ENCODE measurements at regions of chr3 and their contacts with region 1.

Region 1: DNA sequence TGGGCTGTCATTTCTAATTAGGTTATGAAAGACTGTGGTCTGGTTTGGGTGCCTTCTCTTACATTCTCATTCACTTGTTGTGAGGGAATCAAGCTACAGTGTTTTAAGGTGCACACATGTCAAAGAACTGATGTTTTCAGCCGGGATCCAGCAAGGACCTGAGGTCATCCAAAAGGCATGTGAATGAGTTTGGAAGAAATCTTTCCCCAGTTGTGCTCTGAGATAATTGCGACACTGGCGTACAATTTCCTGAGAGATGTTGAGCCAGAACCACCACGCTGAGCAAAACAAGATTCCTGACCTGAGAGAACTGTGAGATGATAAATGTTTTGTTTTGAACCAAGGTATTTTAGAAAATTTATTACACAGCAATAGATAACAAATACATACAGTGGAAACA is 295.3 kb upstream of the SLITRK3 start:
- DNase-seq: no peak
- H3K4me3 Mint-ChIP-seq: no peak overlapping the region
- H3K27ac Mint-ChIP-seq: no peak overlapping the region
- H3K4me1 Mint-ChIP-seq: no peaks in the 10 kb centered on the region
- H3K27me3 Mint-ChIP-seq: no peaks in the 10 kb centered on the region
- CTCF ChIP-seq: no peak

Region 2: GRCh38 chr3:165464736-165465135 is 26.8 kb before region 1 on chr3:
- CTCF ChIA-PET with region 1: no interaction called
- intact Hi-C with region 1: loop called (anchors 2 kb)
- DNase-seq: no peak
- H3K4me3 Mint-ChIP-seq: no peak overlapping the region
- H3K27ac Mint-ChIP-seq: no peak overlapping the region
- H3K4me1 Mint-ChIP-seq: peaks cover 18% of the 10 kb centered on the region
- H3K27me3 Mint-ChIP-seq: no peaks in the 10 kb centered on the region
- CTCF ChIP-seq: no peak

Region 3: DNA sequence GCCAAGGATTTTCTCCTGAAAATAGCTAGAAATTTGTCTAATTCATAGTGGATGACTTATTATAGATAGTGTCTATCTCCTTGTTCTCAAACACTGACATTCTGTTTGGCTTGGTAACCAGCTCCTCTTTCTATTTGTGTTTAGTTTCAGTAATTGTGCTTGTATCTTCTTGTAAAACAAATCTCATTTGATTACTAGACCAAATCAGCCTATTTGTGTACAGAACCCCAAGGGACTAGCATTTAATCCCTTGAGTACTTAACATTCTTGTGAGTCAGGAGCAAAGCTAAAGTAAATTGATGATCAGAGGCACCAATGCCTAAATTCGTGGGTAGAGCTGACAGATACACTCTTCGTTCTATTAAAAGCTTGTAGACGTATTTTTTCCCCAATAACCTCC is 11.2 kb after region 1 on chr3:
- CTCF ChIA-PET with region 1: no interaction called
- intact Hi-C with region 1: no loop called
- DNase-seq: no peak
- H3K4me3 Mint-ChIP-seq: no peak overlapping the region
- H3K27ac Mint-ChIP-seq: no peak overlapping the region
- H3K4me1 Mint-ChIP-seq: peaks cover 8% of the 10 kb centered on the region
- H3K27me3 Mint-ChIP-seq: no peaks in the 10 kb centered on the region
- CTCF ChIP-seq: no peak

Region 4: DNA sequence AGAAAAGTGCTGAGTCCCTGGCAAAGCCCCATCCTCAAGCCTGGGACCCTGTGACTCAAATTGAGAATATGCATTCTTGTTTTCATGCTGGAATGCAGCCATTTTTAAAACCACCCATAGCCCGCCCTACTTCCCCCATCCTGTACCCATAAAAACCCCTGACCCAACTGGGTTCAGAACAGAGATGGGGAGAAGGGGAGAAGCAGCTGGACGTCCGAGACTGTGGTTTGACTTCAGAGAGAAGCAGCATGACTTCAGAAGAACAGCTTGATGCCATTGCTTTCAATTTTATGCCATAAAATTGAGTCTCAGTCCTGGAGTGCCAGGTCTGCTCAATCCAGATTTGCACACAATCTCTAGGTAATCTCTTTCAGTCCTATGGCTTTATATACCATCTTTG is 267.5 kb after region 1 on chr3:
- CTCF ChIA-PET with region 1: no interaction called
- intact Hi-C with region 1: no loop called
- DNase-seq: no peak
- H3K4me3 Mint-ChIP-seq: no peak overlapping the region
- H3K27ac Mint-ChIP-seq: no peak overlapping the region
- H3K4me1 Mint-ChIP-seq: peaks cover 20% of the 10 kb centered on the region
- H3K27me3 Mint-ChIP-seq: no peaks in the 10 kb centered on the region
- CTCF ChIP-seq: no peak